ENCODE measurements at regions of chr20 and their contacts with region 1.

Region 1: DNA sequence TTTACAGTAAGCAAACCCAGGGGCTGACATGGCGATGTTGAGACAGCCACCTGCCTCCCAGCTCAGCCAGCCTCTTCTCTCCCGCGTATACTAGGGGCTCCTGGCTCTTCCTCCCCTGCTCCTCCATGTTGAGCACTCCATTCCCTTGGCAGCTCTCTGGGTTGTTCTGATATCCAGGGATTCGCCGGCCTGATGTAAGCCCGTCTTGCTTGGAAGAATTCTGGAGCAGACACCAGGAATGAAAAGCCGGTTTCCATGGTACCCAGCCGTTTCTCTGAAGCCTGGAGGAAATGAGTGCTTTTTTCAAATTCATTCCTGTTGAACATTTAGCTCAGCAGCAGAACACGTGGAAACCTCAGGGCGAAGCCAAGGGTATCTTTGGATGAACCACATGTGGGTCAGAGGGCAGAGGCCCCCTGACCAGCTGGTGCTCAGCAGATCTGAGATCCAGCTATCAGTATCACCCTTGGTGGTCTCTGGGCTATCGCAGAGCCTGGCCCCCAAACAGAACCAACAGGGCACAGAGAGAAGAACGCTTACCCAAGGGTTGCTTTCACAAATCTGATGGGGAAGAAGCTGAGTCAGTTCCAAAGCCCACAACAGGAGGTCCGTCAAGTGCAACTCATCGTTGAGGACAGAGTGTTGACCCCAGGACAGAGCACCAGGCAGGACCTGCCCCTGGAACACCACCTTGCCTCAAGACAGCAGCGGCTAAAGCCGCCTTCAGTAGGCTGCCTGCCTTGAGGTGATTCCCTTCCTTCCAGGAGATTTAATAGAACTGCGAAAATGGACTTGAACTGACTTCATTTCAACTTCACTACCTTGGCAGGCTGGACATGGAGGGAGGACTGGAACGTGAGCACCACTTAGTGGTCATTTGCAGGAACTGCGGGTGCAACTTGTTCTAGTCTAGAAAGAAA is 96.1 kb upstream of the RIN2 start:
- DNase-seq: peak; percentile 49 to 53
- ATAC-seq: peak; percentile 83 to 91
- H3K4me3 ChIP-seq: no peak overlapping the region
- H3K27ac ChIP-seq: no peak overlapping the region
- H3K4me1 ChIP-seq: no peaks in the 10 kb centered on the region
- H3K27me3 ChIP-seq: no peaks in the 10 kb centered on the region
- CTCF ChIP-seq: peak; percentile 88 to 99 (median 93)
- POLR2A ChIP-seq: no peak

Region 2: GRCh38 chr20:18632196-18633009 is 1029.6 kb before region 1 on chr20:
- in situ Hi-C with region 1: loop called in 3 of 4 experiments (anchors 25 kb)
- intact Hi-C with region 1: loop called (anchors 5 kb)
- DNase-seq: peak; percentile 9 to 38
- ATAC-seq: peak; percentile 66 to 75
- H3K4me3 ChIP-seq: no peak overlapping the region
- H3K27ac ChIP-seq: no peak overlapping the region
- H3K4me1 ChIP-seq: peaks cover 0 to 3% of the 10 kb centered on the region in 2 donors
- H3K27me3 ChIP-seq: no peaks in the 10 kb centered on the region
- CTCF ChIP-seq: peak; percentile 64 to 87 (median 73)
- POLR2A ChIP-seq: no peak

Region 3: GRCh38 chr20:18904624-18905023 is 757.4 kb before region 1 on chr20:
- in situ Hi-C with region 1: no loop called
- intact Hi-C with region 1: loop called (anchors 10 kb)
- DNase-seq: no peak
- ATAC-seq: no peak
- H3K4me3 ChIP-seq: no peak overlapping the region
- H3K27ac ChIP-seq: no peak overlapping the region
- H3K4me1 ChIP-seq: no peaks in the 10 kb centered on the region
- H3K27me3 ChIP-seq: no peaks in the 10 kb centered on the region
- CTCF ChIP-seq: peak in 1 of 5 experiments; percentile 11
- POLR2A ChIP-seq: no peak

Region 4: GRCh38 chr20:19205977-19206396 is 456.0 kb before region 1 on chr20:
- in situ Hi-C with region 1: loop called (anchors 5 kb)
- intact Hi-C with region 1: loop called (anchors 1 kb)
- DNase-seq: peak; percentile 23 to 58
- ATAC-seq: peak; percentile 47 to 75
- H3K4me3 ChIP-seq: no peak overlapping the region
- H3K27ac ChIP-seq: no peak overlapping the region
- H3K4me1 ChIP-seq: no peaks in the 10 kb centered on the region
- H3K27me3 ChIP-seq: no peaks in the 10 kb centered on the region
- CTCF ChIP-seq: peak; percentile 68 to 90 (median 87)
- POLR2A ChIP-seq: no peak

Region 5: GRCh38 chr20:19588732-19589131 is 73.2 kb before region 1 on chr20:
- in situ Hi-C with region 1: no loop called
- intact Hi-C with region 1: loop called (anchors 5 kb)
- DNase-seq: no peak
- ATAC-seq: no peak
- H3K4me3 ChIP-seq: no peak overlapping the region
- H3K27ac ChIP-seq: no peak overlapping the region
- H3K4me1 ChIP-seq: peaks cover 7% of the 10 kb centered on the region in 2 donors
- H3K27me3 ChIP-seq: no peaks in the 10 kb centered on the region
- CTCF ChIP-seq: no peak
- POLR2A ChIP-seq: no peak

Region 6: DNA sequence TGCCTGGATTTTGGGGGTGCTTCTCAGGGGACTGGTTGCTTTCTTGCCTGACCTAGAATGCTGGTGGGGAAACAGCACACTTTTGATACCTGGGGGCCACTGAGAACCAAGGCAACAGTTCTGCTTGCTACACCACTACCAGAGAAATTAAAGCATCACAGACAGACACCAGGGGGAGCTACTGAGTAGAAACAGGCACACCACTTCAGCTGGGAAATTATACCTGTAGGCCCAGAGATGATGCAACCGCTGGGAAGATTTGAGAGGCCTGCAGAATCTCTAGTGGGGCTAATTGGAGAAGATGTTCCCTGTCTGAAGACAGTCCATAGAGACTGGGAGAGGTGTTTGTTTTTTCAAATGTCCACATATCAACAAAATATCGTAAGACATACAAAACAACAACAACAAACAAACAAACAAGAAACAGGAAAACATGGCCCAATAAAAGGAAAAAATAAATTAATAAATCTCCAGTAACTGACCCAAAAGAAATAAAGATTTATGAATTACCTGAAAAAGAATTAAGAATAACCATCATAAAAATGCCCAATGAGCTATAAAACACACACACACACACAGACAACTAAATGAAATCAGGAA is 33.3 kb before region 1 on chr20:
- in situ Hi-C with region 1: no loop called
- intact Hi-C with region 1: loop called (anchors 1 kb)
- DNase-seq: peak; percentile 22 to 27
- ATAC-seq: peak; percentile 71 to 86
- H3K4me3 ChIP-seq: no peak overlapping the region
- H3K27ac ChIP-seq: no peak overlapping the region
- H3K4me1 ChIP-seq: no peaks in the 10 kb centered on the region
- H3K27me3 ChIP-seq: no peaks in the 10 kb centered on the region
- CTCF ChIP-seq: peak; percentile 27 to 74 (median 63)
- POLR2A ChIP-seq: no peak